Colonic mucosa (tissue), 4 donors: ENCODE measurements at regions of chr5 and their contacts with region 1.

Region 1: GRCh38 chr5:170791325-170791954 is 7.9 kb downstream of the GABRP start:
- DNase-seq: peak; percentile 70
- H3K4me3 ChIP-seq: no peak overlapping the region
- H3K27ac ChIP-seq: no peak overlapping the region
- H3K4me1 ChIP-seq: no peaks in the 10 kb centered on the region
- H3K27me3 ChIP-seq: no peaks in the 10 kb centered on the region
- CTCF ChIP-seq: peak; percentile 24

Region 2: DNA sequence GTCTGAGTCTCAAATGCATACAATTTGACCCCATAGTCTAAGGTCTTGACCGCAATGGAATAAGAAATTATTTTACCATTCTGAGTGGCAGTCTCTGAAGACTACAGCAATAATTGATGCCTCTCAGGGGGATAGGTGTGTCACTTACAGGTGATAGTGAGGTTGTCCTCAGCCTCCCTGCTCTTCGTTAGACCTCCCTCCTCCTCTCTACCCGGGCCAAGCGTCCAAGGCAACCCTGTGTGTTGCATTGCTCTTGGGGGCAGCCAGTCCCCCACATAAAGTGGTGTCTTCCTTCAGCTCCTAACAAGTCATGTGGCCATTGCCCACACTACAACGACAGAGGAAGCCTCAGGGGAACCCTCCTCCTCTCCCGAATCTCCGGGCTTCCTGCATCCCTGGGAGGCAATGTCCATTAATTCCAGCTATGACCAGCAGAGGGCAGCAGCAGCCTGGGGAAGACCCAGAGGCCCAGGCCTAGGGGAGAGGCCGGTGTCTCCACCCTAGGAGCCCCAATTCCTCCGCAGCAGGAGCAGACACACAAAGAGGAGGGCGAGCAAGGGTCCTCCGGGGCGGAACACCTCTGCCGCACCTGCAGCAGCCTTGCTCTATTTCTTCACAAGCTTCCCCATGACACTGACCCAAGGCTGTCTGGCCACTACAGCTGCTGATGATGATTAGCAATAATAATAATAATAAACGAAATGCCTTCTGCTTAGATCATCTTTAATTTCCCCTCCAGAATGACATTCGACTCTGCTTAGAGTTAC is 152.8 kb before region 1 on chr5:
- intact Hi-C with region 1: loop called (anchors 5 kb)
- DNase-seq: peak; percentile 67
- H3K4me3 ChIP-seq: no peak overlapping the region
- H3K27ac ChIP-seq: no peak overlapping the region
- H3K4me1 ChIP-seq: no peaks in the 10 kb centered on the region
- H3K27me3 ChIP-seq: no peaks in the 10 kb centered on the region
- CTCF ChIP-seq: peak; percentile 84